Dorsolateral prefrontal cortex (tissue), 120 donors: ENCODE measurements at regions of chr15 and their contacts with region 1.

Region 1: GRCh38 chr15:97903971-97904572 is 56.4 kb upstream of the ARRDC4 start:
- DNase-seq: peak; percentile 23 to 79 (median 64)
- H3K4me3 ChIP-seq: peak overlapping the region in 19 of 59 donors; percentile 2 to 41 (median 25)
- H3K27ac ChIP-seq: peak overlapping the region in 2 of 59 donors; percentile 1 to 36
- H3K27me3 ChIP-seq: peaks cover 0 to 78% (median 8%) of the 10 kb centered on the region in 45 donors
- CTCF ChIP-seq: peak; percentile 16 to 84 (median 66)

Region 2: DNA sequence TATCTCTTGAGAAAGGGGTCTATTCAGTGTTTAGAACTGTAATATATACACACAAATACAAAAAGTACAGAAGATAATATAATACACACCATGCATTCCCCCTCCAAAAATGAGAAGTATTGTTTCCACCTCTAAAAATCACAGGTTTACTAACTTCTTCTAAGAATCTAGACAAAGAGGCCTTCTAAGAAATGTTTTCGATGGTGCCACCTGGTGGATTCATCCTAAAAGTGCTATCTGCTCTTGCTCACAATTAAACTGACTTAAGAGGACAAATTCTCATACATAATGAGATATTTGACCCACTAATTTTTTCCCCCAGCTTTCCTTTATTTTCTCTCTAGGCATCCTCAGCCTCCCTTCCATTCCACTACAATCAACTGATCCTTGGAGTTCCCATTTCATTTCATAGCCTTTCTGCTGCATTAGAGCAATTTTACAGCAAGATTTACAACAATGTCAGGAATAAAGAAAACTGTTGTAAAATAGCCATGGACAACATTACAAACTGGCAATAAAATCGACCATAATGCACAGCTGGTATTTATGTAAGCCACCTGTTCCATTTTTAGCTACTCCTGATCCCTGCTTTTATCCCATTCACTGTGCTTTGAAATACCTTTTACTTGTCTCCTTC is 181.0 kb after region 1 on chr15:
- intact Hi-C with region 1: loop called (anchors 2 to 5 kb)
- DNase-seq: peak in 4 of 10 donors; percentile 7 to 58 (median 25)
- H3K4me3 ChIP-seq: no peak overlapping the region
- H3K27ac ChIP-seq: no peak overlapping the region
- H3K27me3 ChIP-seq: peaks cover 0 to 4% (median 0%) of the 10 kb centered on the region in 45 donors
- CTCF ChIP-seq: peak; percentile 61 to 90 (median 75)

Region 3: GRCh38 chr15:98177924-98178592 is 274.0 kb after region 1 on chr15:
- intact Hi-C with region 1: loop called (anchors 5 kb)
- DNase-seq: peak in 6 of 10 donors; percentile 16 to 42 (median 36)
- H3K4me3 ChIP-seq: no peak overlapping the region
- H3K27ac ChIP-seq: no peak overlapping the region
- H3K27me3 ChIP-seq: peaks cover 0 to 90% (median 33%) of the 10 kb centered on the region in 45 donors
- CTCF ChIP-seq: peak; percentile 21 to 84 (median 65)